ENCODE measurements at regions of chr4 and their contacts with region 1.

Region 1: GRCh38 chr4:157978680-157979361 is 194.0 kb downstream of the GASK1B start:
- DNase-seq: peak; percentile 22 to 91 (median 58)

Region 2: DNA sequence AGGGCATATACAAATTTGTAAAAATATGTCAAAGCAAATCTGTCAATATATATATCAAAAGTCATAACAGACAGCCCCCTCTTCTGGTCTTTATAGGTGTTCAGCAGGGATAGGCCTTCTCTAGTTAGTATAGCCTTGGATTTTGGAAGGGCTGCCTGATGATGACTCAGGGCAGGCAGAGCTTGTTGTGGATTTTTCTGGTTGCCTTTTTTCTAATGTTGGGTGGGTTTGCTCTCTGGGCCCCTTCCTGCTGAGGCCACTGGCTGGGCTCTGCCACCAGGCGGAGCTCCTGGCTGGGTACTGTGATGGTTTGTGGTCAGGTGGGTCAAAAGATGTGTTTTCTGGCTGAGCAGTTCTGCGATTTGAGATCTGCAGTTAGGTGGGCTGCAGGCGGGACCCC is 464.1 kb before region 1 on chr4:
- intact Hi-C with region 1: loop called (anchors 10 kb)
- DNase-seq: no peak

Region 3: GRCh38 chr4:157964463-157964862 is 14.4 kb before region 1 on chr4:
- intact Hi-C with region 1: no loop called
- DNase-seq: no peak